ENCODE measurements at regions of chr7 and their contacts with region 1.

Region 1: DNA sequence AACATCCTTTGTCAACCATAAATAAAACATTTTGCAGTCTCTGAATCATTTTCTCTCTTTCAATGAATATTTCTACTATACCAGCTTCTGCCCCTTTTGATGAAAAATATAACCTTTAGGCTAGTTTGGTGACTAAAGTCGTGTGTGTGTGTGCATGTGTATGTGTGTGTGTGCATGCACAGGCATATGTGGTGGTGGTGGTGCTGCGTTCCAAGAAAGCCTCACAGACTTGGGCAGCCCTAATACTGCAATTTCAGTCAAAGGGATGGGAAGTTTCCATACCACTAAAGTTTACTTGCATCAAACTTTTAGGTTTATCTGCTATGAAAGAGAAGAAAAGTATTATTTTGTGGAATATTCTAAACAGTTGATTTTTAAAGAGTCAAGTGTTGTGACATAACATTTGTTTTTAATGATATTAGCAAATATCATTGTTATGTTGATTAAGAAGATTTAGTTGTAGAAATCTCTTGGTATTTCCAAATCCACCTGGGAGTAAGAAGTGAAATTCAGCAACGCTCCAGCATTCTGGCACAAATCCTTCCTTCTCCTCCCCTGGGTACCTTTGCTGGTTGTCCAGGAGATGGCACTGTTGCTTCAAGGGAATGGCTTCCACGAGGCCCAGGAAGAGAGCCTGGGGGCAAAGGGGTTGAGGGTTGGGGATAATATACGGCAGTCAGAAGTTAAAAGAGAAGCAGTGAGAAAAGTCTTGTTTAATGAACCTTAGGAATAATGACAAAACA is 41.5 kb downstream of the ASB4 start:
- DNase-seq: peak; percentile 48
- H3K4me3 ChIP-seq: no peak overlapping the region
- H3K27ac ChIP-seq: no peak overlapping the region
- H3K4me1 ChIP-seq: peaks cover 0 to 28% (median 18%) of the 10 kb centered on the region in 4 donors
- H3K27me3 ChIP-seq: no peaks in the 10 kb centered on the region
- CTCF ChIP-seq: peak; percentile 83 to 91 (median 90)
- EP300 ChIP-seq: no peak
- POLR2A ChIP-seq: no peak

Region 2: GRCh38 chr7:95675016-95675415 is 147.8 kb after region 1 on chr7:
- in situ Hi-C with region 1: loop called in 1 of 4 experiments (anchors 10 kb)
- intact Hi-C with region 1: no loop called
- DNase-seq: no peak
- H3K4me3 ChIP-seq: no peak overlapping the region
- H3K27ac ChIP-seq: no peak overlapping the region
- H3K4me1 ChIP-seq: peaks cover 0 to 9% (median 0%) of the 10 kb centered on the region in 4 donors
- H3K27me3 ChIP-seq: no peaks in the 10 kb centered on the region
- CTCF ChIP-seq: no peak
- EP300 ChIP-seq: no peak
- POLR2A ChIP-seq: no peak